Activated T-helper 1 cell treated with anti-CD3 and anti-CD28 coated beads, Interleukin-12 subunit alpha, Interleukin-12 subunit beta, Interleukin-2, Interleukin-4 antibody, amounts not matched to agents 30 ng/mL and 10 ng/mL and 1 ng/mL, durations not matched to agents 14 hours and 24 hours and 36 hours (primary cell): ENCODE measurements at regions of chr19 and their contacts with region 1.

Region 1: DNA sequence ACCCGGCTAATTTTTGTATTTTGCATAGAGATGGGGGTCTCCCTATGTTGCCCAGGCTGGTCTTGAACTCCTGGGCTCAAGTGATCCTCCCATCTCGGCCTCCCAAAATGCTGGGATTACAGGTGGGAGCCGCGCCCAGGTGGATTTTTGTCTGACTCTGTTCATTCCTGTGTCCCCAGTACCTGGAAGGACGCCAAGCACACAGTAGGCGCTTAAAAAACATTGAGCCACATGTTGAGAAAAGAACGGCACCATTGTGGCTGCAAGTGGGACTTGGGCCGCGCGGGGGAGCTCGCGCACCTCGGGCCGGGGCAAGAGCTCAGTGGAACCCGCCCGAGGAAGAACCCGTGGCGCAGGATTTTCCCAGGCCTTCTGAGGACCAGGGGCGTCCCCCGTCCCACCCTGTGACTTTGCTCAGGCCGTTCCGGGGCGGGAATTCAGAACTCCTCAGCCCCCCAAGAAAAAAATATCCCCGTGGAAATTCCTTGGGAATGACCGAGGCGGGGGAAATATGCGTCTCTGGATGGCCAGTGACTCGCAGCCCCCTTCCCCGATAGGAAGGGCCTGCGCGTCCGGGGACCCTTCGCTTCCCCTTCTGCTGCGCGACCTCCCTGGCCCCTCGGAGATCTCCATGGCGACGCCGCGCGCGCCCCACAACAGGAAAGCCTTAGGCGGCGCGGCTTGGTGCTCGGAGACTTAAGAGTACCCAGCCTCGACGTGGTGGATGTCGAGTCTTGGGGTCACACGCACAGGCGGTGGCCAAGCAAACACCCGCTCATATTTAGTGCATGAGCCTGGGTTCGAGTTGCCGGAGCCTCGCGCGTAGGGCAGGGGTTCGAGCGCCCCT is 1.4 kb upstream of the ICAM1 start:
- DNase-seq: peak; percentile 84
- H3K4me3 Mint-ChIP-seq: peak overlapping the region; percentile 94
- H3K27ac Mint-ChIP-seq: peak overlapping the region; percentile 94
- H3K4me1 Mint-ChIP-seq: peaks cover 28% of the 10 kb centered on the region
- H3K27me3 Mint-ChIP-seq: no peaks in the 10 kb centered on the region

Region 2: DNA sequence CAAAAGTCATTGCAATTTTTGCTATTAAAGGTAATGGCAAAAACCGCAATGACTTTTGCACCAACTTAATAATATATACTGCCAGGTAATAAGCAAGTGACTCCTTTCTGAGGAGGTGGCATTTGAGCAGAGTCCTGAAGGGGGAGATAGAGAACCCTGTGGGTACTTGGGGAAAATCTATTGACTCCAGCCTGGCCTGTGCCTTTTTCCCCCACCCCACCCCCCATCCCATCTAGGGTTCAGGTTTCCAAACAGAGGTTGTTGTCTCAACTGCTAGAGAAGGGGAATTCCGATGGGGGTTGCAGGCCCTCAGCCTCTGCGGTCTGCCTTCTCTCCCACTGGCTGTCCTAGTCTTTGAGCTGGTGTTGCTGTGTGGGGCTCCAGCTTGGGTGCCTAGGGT is 49.9 kb before region 1 on chr19:
- intact Hi-C with region 1: no loop called
- DNase-seq: peak; percentile 22
- H3K4me3 Mint-ChIP-seq: no peak overlapping the region
- H3K27ac Mint-ChIP-seq: no peak overlapping the region
- H3K4me1 Mint-ChIP-seq: peaks cover 4% of the 10 kb centered on the region
- H3K27me3 Mint-ChIP-seq: no peaks in the 10 kb centered on the region

Region 3: DNA sequence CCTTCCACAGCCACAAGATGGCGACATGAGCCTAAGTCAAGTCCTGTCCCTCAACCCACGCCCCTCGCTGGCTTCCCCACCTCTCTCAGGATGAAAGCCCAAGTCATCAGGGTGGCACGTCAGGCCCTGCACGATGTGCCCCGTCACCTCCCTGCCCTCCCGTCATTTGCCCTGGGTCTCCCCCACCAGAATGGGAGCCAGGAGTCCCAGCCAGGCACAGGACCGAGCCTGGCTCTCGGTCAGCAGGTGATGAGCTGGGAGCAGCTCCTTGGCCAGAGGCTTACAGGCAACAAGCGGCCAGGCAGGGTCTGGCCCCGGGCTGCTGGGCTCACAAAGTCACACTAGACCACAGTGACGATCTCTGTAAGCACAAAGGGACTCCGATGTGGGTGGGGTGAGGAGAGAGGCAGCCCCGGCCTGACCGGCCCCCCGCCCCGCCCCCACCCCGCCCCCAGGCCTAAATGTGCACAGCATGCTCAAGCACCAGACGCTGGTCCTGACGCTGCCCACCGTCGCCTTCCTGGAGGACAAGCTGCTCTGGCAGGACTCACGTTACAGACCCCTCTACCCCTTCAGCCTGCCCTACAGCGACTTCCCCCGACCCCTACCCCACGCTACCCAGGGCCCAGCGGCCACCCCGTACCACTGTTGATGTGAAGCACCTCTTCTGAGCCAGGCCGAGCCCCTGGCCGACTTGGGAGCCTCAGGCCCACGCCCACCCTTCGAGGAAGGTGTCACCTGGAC is 10.2 kb before region 1 on chr19:
- intact Hi-C with region 1: loop called (anchors 1 kb)
- DNase-seq: peak; percentile 87
- H3K4me3 Mint-ChIP-seq: peak overlapping the region; percentile 68
- H3K27ac Mint-ChIP-seq: peak overlapping the region; percentile 93
- H3K4me1 Mint-ChIP-seq: peaks cover 21% of the 10 kb centered on the region
- H3K27me3 Mint-ChIP-seq: no peaks in the 10 kb centered on the region

Region 4: GRCh38 chr19:10289167-10289835 is 19.7 kb after region 1 on chr19:
- intact Hi-C with region 1: loop called (anchors 1 kb)
- DNase-seq: peak; percentile 42
- H3K4me3 Mint-ChIP-seq: peak overlapping the region; percentile 79
- H3K27ac Mint-ChIP-seq: peak overlapping the region; percentile 58
- H3K4me1 Mint-ChIP-seq: peaks cover 67% of the 10 kb centered on the region
- H3K27me3 Mint-ChIP-seq: peaks cover 53% of the 10 kb centered on the region

Region 5: GRCh38 chr19:10315335-10316214 is 46.0 kb after region 1 on chr19 and contains the start of gene FDX2:
- intact Hi-C with region 1: loop called (anchors 1 kb)
- DNase-seq: peak; percentile 87
- H3K4me3 Mint-ChIP-seq: peak within 1 kb of the TSS; percentile 94
- H3K27ac Mint-ChIP-seq: peak within 1 kb of the TSS; percentile 86
- H3K4me1 Mint-ChIP-seq: peaks cover 22% of the 10 kb centered on the region
- H3K27me3 Mint-ChIP-seq: no peaks in the 10 kb centered on the region
- total RNA-seq, gene FDX2: 21.6 and 24.4 TPM in 2 replicates

Region 6: DNA sequence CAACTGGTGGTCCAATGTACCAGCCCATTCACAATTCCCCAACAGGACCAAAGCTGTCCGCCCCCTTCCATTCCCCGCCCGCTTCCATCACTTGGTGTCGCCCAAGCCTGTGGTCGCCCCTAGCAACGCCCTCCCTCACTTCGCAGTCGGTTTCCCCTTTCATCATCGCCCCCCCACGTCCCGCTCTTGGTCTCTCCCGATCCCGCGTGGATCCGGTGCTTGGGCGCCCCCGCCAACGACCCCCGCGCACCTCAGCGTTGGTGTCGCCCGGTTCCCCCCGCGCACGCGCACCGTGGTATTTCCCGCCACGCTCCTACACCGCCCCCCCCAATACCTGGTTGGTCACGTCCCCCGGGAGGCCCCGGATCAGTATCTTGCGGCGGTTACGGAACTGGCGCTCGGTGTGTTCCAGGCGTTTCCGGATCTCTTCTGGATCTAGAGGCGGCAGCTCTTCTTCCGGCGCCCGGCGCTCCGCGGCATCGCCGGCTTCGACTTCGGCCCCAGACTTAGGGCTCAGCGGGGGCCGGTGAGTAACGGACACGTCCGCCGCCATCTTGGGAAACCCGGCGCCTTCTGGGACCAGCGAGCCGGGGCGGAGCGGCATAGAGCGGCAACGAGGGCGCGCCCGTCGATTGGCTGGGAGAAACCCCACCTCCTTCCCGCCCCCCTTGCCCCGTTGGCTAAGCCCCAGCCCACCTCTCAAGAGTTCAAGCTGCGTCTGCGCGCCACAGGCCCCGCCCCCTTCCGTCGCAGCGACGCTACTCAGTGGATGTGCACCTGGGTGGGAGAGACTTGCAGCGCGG is 63.6 kb after region 1 on chr19 and contains the start of gene RAVER1:
- intact Hi-C with region 1: loop called (anchors 1 kb)
- DNase-seq: peak; percentile 95
- H3K4me3 Mint-ChIP-seq: peak within 1 kb of the TSS; percentile 90
- H3K27ac Mint-ChIP-seq: peak within 1 kb of the TSS; percentile 95
- H3K4me1 Mint-ChIP-seq: peaks cover 11% of the 10 kb centered on the region
- H3K27me3 Mint-ChIP-seq: no peaks in the 10 kb centered on the region
- total RNA-seq, gene RAVER1: 92.5 and 92.8 TPM in 2 replicates

Region 7: GRCh38 chr19:10343495-10343894 is 73.9 kb after region 1 on chr19:
- intact Hi-C with region 1: no loop called
- DNase-seq: no peak
- H3K4me3 Mint-ChIP-seq: no peak overlapping the region
- H3K27ac Mint-ChIP-seq: no peak overlapping the region
- H3K4me1 Mint-ChIP-seq: peaks cover 17% of the 10 kb centered on the region
- H3K27me3 Mint-ChIP-seq: no peaks in the 10 kb centered on the region

Region 8: GRCh38 chr19:10353793-10354391 is 84.3 kb after region 1 on chr19:
- intact Hi-C with region 1: no loop called
- DNase-seq: no peak
- H3K4me3 Mint-ChIP-seq: no peak overlapping the region
- H3K27ac Mint-ChIP-seq: no peak overlapping the region
- H3K4me1 Mint-ChIP-seq: no peaks in the 10 kb centered on the region
- H3K27me3 Mint-ChIP-seq: no peaks in the 10 kb centered on the region